ENCODE measurements at regions of chr1 and their contacts with region 1.

Region 1: DNA sequence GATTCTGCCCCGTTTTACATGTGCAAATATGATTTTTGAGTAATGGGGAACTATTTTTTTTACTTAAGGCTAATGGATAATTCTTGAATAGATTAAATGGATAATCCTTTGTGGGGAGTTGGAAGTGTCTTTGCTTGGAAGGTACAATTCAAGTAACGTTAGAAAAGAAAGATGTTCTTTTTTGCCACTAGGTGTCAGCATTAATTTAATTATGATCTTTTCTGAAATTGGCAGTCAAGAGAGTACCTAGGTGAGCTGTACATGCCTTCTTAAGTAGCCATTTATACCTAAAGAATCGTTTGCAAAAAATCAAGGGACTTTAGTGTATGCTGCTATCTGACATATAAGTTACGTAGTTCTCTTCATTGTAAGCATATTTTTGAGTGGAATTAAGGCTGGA is 2.2 kb downstream of the FBXO28 start:
- DNase-seq: no peak
- ATAC-seq: peak; percentile 41

Region 2: GRCh38 chr1:224329842-224330753 is 214.0 kb after region 1 on chr1 and contains the start of gene NVL:
- intact Hi-C with region 1: loop called in 1 of 2 experiments (anchors 5 kb)
- DNase-seq: peak; percentile 88
- ATAC-seq: peak; percentile 91
- total RNA-seq, gene NVL: 29.5 to 40.3 TPM

Region 3: DNA sequence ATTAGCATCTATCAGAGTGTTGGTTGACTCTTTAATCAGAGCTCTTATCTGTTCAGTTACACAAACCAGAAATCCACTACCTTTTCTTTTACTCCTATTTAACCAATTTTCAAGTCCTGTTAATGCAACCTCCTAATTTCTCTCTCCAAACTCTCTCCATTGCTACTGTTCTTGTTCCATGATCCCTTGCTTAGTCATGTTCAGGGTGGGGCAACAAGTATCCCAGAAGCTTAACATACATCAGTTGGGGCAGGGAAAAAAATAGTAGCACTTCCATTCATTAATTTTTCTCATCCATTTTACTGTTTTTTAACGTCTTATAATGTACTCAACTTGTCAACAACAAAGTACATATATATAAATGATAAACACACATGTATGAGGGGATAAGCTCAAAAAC is 1422.9 kb after region 1 on chr1:
- intact Hi-C with region 1: no loop called
- DNase-seq: no peak
- ATAC-seq: no peak

Measured in left colon (tissue), 2 donors.